ENCODE measurements at regions of chr15 and their contacts with region 1.

Region 1: GRCh38 chr15:62569460-62570412 is 404.7 kb upstream of the C2CD4B start:
- DNase-seq: no peak
- ATAC-seq: no peak
- H3K4me3 ChIP-seq: no peak overlapping the region
- H3K4me3 Mint-ChIP-seq: no peak overlapping the region
- H3K27ac ChIP-seq: no peak overlapping the region
- H3K27ac Mint-ChIP-seq: no peak overlapping the region
- H3K4me1 ChIP-seq: no peaks in the 10 kb centered on the region
- H3K4me1 Mint-ChIP-seq: no peaks in the 10 kb centered on the region
- H3K27me3 ChIP-seq: peaks cover 0 to 3% of the 10 kb centered on the region in 2 experiments
- H3K27me3 Mint-ChIP-seq: peaks cover 15% of the 10 kb centered on the region
- CTCF ChIP-seq: no peak

Region 2: GRCh38 chr15:61049934-61050333 is 1519.8 kb before region 1 on chr15:
- CTCF ChIA-PET with region 1: no interaction called
- POLR2A ChIA-PET with region 1: no interaction called
- intact Hi-C with region 1: loop called in 1 of 2 experiments (anchors 10 kb)
- DNase-seq: no peak
- ATAC-seq: no peak
- H3K4me3 ChIP-seq: no peak overlapping the region
- H3K4me3 Mint-ChIP-seq: no peak overlapping the region
- H3K27ac ChIP-seq: no peak overlapping the region
- H3K27ac Mint-ChIP-seq: no peak overlapping the region
- H3K4me1 ChIP-seq: no peaks in the 10 kb centered on the region
- H3K4me1 Mint-ChIP-seq: no peaks in the 10 kb centered on the region
- H3K27me3 ChIP-seq: no peaks in the 10 kb centered on the region
- H3K27me3 Mint-ChIP-seq: peaks cover 17% of the 10 kb centered on the region
- CTCF ChIP-seq: no peak